ENCODE measurements at regions of chr11 and their contacts with region 1.

Region 1: DNA sequence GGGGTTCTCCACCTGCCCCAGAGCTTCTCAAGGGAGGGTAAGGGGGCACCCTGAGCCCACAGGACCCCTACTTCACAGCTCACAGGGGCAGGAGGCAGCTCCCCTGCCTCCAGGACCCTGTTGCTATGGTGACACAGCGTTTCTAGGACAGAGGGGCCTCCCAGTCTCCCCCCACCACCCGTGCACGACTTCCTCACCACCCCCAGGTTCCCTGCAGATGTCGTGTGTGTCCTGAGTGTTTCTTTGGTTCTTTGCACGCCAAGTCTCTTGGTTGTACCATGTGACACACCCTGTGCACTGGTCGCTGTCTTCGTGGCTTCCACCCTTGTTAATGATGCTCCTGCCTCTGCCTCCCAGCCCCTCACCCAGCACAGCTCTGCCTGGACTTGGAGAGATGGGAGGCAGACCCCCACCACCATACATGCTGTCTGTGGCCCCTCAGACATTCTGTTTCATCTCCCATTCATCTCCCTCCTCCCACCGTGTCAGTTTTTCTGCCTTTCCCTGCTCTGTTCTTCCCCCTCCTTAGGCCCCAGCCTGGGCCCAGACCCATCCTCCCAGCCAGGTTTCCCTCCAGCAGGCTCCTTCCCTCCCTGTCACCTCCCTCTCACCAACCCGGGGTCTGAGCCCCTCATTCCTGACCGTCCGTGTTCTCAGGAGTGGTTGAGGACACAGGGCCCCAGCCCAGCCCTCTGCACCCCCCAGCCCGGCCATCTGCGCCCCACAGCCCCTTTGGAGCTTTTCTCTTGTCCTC is 24.5 kb upstream of the RAB1B start:
- DNase-seq: no peak

Region 2: DNA sequence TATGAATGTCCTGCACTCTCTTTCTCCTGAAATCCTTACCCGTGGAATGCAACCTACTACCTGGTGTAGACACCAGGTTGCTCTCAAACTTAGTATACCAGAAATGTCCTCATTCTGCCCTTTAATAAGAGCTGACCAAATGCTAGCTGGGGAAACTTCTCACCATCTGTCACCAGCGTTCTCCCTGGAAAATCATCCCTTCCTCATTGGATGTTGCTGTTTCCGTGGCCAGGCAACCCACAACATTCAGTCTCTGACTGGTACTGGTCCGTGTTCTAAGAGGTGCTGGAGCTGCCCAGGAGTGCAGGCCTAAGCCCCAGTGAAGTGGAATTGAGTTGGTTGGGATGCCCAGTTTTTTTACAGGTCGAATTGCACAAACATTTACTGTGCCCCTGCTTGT is 16.3 kb before region 1 on chr11:
- intact Hi-C with region 1: loop called in 1 of 2 experiments (anchors 1 kb)
- DNase-seq: no peak

Measured in posterior vena cava (tissue), 2 donors.